Activated naive CD4-positive, alpha-beta T cell treated with anti-CD3 and anti-CD28 coated beads for 36 hours (primary cell): ENCODE measurements at regions of chr19 and their contacts with region 1.

Region 1: DNA sequence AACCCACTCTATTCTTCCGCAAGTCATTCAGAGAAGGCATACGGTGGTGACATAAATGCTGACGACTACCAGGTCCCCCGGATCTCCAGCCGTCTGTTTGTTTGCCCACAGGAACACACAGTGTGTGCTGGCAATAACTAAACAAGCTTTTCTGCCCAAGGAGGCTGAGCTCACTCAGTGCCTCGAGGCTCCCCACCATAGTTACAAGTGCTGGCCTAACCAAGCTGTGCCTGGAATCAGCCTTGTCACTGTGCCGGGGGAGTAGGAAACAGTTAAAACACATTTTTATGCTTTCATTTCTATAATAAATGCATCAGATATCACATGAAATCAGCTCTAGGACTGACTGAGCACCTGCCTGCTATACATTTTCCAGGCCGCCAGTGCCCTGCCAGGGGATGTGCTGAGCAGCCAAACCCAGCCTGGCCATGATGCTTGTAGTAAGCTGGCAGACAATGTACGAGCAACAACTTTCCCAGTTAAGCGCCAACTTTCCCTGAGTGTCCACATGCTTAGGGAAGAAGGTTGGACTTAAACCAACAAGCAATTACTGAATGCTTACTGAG is 28.1 kb downstream of the BRD4 start:
- DNase-seq: peak; percentile 43
- H3K4me3 Mint-ChIP-seq: no peak overlapping the region
- H3K27ac Mint-ChIP-seq: peak overlapping the region; percentile 79
- H3K4me1 Mint-ChIP-seq: peaks cover 85% of the 10 kb centered on the region
- H3K27me3 Mint-ChIP-seq: no peaks in the 10 kb centered on the region

Region 2: DNA sequence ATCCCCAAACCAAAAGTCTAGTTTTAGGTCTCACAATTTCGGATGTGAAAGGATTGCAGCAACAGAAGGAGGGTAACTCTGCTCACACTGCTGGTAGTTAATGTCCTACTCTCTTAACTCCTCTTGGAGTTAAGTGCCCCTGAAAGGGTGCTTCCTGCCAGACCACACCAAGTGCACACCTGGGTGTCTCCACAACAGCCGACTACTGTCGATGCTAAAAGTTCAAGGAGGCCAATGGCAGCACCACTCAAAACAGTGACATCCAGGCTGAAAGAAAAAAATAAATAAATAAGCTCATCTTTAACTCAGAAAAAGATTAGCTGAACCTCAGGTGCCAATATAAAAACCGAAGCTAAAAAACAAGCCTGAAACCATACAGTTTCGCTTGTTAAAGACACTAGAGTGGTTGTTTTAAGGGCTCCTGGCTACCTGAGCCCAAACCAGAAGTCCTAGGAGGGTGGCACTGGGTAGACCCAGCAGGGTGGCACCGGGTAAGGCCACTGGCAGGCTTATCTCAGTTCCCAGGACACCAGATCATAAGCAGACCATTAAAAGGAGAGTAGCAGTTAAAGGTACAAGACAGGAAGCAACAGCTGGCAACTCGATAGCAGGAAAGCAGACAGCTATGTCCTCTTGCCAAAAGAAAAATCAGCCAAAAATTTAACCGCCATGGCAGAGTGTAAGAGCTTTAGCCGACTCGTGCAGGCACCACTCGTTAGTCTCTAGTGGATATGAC is 11.2 kb before region 1 on chr19:
- CTCF ChIA-PET with region 1: no interaction called
- intact Hi-C with region 1: loop called (anchors 1 kb)
- DNase-seq: no peak
- H3K4me3 Mint-ChIP-seq: peak overlapping the region; percentile 43
- H3K27ac Mint-ChIP-seq: peak overlapping the region; percentile 91
- H3K4me1 Mint-ChIP-seq: peaks cover 99% of the 10 kb centered on the region
- H3K27me3 Mint-ChIP-seq: no peaks in the 10 kb centered on the region

Region 3: GRCh38 chr19:15318241-15318691 is 14.0 kb after region 1 on chr19:
- CTCF ChIA-PET with region 1: interaction called, 3 read pairs
- intact Hi-C with region 1: loop called (anchors 2 kb)
- DNase-seq: no peak
- H3K4me3 Mint-ChIP-seq: no peak overlapping the region
- H3K27ac Mint-ChIP-seq: peak overlapping the region; percentile 54
- H3K4me1 Mint-ChIP-seq: peaks cover 85% of the 10 kb centered on the region
- H3K27me3 Mint-ChIP-seq: no peaks in the 10 kb centered on the region